ENCODE measurements at regions of chr17 and their contacts with region 1.

Region 1: DNA sequence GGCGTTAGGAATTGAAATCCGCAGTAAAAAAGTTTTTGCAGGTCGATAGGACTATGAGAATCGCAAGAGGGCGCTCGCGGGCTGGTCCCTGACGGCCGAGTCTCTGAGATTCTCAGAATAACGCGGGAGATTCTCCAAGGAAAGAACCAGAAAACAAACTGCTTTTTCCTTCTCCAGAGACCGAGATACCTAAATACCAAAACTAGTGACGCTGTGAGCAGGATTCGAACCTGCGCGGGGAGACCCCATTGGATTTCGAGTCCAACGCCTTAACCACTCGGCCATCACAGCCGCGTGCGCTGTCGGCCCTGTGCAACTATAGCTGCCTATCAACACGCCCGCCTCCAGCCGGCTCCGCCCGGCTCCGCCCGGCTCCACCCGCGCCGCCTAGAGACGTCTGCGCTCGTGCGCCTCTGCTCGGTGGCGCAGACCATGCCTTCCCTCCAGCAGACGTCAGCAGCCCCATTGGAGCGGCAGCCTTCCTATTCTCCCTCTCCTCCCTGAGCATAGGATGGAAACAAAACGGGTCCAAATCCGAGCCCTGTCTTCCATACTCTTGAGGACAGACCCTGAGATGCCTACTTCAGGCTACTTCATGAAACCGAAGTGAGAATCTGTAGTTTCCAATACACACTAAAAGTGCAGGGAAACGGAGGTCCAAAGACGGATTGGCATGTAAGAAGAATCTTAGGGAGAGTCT is 13.4 kb downstream of the PER1 start:
- DNase-seq: peak; percentile 96 to 97
- H3K4me3 ChIP-seq: peak overlapping the region in 2 of 3 donors; percentile 32 to 52
- H3K27ac ChIP-seq: peak overlapping the region; percentile 87 to 92
- H3K4me1 ChIP-seq: peaks cover 0 to 7% of the 10 kb centered on the region in 2 donors
- H3K27me3 ChIP-seq: no peaks in the 10 kb centered on the region
- CTCF ChIP-seq: peak; percentile 85 to 99 (median 93)
- POLR2A ChIP-seq: peak; percentile 54

Region 2: GRCh38 chr17:8189711-8190477 is 51.1 kb after region 1 on chr17 and contains the start of gene BORCS6:
- intact Hi-C with region 1: no loop called
- DNase-seq: peak; percentile 95 to 98
- H3K4me3 ChIP-seq: peak within 1 kb of the TSS; percentile 68 to 93 (median 91)
- H3K27ac ChIP-seq: peak within 1 kb of the TSS; percentile 94 to 96
- H3K4me1 ChIP-seq: peaks cover 0 to 10% of the 10 kb centered on the region in 2 donors
- H3K27me3 ChIP-seq: no peaks in the 10 kb centered on the region
- CTCF ChIP-seq: no peak
- POLR2A ChIP-seq: peak; percentile 59
- total RNA-seq, gene BORCS6: 8.5 to 11.5 (median 10.8) TPM

Region 3: GRCh38 chr17:8209909-8210760 is 71.3 kb after region 1 on chr17 and contains the start of gene AURKB:
- intact Hi-C with region 1: loop called (anchors 10 kb)
- DNase-seq: peak; percentile 94 to 95
- H3K4me3 ChIP-seq: peak within 1 kb of the TSS; percentile 48 to 66 (median 63)
- H3K27ac ChIP-seq: peak within 1 kb of the TSS; percentile 52 to 87
- H3K4me1 ChIP-seq: no peaks in the 10 kb centered on the region
- H3K27me3 ChIP-seq: no peaks in the 10 kb centered on the region
- CTCF ChIP-seq: no peak
- POLR2A ChIP-seq: no peak
- total RNA-seq, gene AURKB: 0.44 to 3.8 (median 1.6) TPM